T-cell (primary cell): ENCODE measurements at regions of chr15 and their contacts with region 1.

Region 1: DNA sequence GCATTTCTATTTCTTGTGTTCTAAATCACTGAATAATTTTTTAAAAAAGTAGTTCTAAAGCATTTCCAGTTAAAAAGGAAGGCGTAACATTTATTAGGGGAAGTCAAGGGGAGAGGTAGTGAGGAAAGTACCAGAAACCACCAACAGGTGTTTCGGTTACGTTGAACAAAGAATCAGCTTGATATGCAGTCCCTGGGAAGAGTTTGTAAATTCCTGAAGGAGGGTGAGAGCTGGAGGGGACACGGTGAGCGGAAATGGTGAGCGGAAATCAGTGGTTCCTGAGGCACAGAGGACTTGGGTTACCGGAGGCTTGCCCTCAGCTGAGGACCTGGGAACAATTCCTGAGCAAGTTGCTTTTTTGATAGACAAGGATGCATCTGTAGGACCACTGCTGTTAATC is 17.8 kb downstream of the MAP2K1 start:
- DNase-seq: no peak
- ATAC-seq: no peak
- H3K4me3 ChIP-seq: peak overlapping the region in 1 of 2 donors; percentile 12
- H3K4me3 Mint-ChIP-seq: peak overlapping the region; percentile 57 to 63 (median 60)
- H3K27ac ChIP-seq: no peak overlapping the region
- H3K27ac Mint-ChIP-seq: peak overlapping the region; percentile 69 to 82
- H3K4me1 ChIP-seq: peaks cover 56 to 87% of the 10 kb centered on the region in 2 experiments
- H3K4me1 Mint-ChIP-seq: peaks cover 89 to 94% (median 92%) of the 10 kb centered on the region in 3 donors
- H3K27me3 ChIP-seq: no peaks in the 10 kb centered on the region
- H3K27me3 Mint-ChIP-seq: no peaks in the 10 kb centered on the region

Region 2: DNA sequence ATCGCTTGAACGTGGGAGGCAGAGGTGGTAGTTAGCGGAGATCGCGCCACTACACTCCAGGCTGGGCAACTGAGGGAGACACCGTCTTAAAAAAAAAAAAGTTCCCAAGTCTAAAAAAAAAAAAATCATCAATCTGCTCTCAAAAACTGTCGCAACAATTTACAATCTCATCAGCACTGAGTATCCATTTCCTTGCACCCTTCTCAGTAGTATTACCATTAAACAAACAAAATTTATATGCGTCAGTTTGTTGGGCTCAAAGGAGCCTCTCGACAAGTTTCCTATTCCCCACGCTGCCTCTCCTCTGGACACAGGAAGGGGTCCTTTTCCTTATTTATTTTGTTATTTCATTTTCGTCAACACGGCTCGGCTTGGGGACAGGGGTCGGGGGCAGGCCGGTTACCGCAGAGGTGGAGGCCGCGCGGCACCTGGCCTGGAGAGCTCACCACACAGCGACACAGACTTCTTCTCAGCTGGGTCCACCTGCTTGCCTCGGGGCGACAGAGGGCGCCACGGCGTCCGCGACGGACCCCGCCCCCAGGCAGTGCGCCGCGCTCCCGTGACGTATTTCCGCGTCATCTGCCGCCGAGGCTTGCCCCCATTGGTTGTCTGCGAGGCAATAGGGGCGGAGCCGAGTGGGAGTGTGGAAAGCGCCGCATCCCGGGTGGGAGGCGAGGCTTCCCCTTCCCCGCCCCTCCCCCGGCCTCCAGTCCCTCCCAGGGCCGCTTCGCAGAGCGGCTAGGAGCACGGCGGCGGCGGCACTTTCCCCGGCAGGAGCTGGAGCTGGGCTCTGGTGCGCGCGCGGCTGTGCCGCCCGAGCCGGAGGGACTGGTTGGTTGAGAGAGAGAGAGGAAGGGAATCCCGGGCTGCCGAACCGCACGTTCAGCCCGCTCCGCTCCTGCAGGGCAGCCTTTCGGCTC is 18.1 kb before region 1 on chr15 and contains the start of gene MAP2K1:
- CTCF ChIA-PET with region 1: interaction called in 1 of 2 experiments, 15 read pairs
- POLR2A ChIA-PET with region 1: interaction called, 3 to 4 read pairs
- DNase-seq: peak; percentile 95 to 100 (median 98)
- ATAC-seq: peak; percentile 83 to 88 (median 87)
- H3K4me3 ChIP-seq: peak within 1 kb of the TSS; percentile 88 to 91
- H3K4me3 Mint-ChIP-seq: peak within 1 kb of the TSS; percentile 92 to 99 (median 99)
- H3K27ac ChIP-seq: peak within 1 kb of the TSS; percentile 78
- H3K27ac Mint-ChIP-seq: peak within 1 kb of the TSS; percentile 99 to 100
- H3K4me1 ChIP-seq: peaks cover 28 to 47% of the 10 kb centered on the region in 2 experiments
- H3K4me1 Mint-ChIP-seq: peaks cover 51 to 58% (median 57%) of the 10 kb centered on the region in 3 donors
- H3K27me3 ChIP-seq: no peaks in the 10 kb centered on the region
- H3K27me3 Mint-ChIP-seq: no peaks in the 10 kb centered on the region
- total RNA-seq, gene MAP2K1: 38.7 to 62.8 (median 49.4) TPM

Region 3: DNA sequence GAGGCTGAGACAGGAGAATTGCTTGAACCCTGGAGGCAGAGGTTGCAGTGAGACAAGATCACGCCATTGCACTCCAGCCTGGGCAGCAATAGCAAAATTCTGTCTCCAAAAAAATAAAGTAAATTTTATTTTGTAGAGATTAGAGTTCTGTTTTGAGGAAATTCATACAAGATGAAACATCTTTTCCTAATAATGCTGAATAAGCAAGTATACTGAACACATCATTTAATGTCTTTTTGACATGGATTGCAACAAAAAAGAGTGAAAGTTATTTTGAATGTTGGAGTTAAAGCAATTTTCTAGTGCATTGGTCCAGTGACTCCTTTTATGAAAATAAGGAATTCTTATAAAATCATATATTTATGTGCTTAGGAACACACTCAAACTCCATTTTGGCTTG is 140.7 kb after region 1 on chr15:
- CTCF ChIA-PET with region 1: no interaction called
- POLR2A ChIA-PET with region 1: no interaction called
- DNase-seq: no peak
- ATAC-seq: no peak
- H3K4me3 ChIP-seq: no peak overlapping the region
- H3K4me3 Mint-ChIP-seq: no peak overlapping the region
- H3K27ac ChIP-seq: no peak overlapping the region
- H3K27ac Mint-ChIP-seq: no peak overlapping the region
- H3K4me1 ChIP-seq: no peaks in the 10 kb centered on the region
- H3K4me1 Mint-ChIP-seq: no peaks in the 10 kb centered on the region
- H3K27me3 ChIP-seq: no peaks in the 10 kb centered on the region
- H3K27me3 Mint-ChIP-seq: no peaks in the 10 kb centered on the region